A549 (cell line): ENCODE measurements at regions of chr2 and their contacts with region 1.

Region 1: DNA sequence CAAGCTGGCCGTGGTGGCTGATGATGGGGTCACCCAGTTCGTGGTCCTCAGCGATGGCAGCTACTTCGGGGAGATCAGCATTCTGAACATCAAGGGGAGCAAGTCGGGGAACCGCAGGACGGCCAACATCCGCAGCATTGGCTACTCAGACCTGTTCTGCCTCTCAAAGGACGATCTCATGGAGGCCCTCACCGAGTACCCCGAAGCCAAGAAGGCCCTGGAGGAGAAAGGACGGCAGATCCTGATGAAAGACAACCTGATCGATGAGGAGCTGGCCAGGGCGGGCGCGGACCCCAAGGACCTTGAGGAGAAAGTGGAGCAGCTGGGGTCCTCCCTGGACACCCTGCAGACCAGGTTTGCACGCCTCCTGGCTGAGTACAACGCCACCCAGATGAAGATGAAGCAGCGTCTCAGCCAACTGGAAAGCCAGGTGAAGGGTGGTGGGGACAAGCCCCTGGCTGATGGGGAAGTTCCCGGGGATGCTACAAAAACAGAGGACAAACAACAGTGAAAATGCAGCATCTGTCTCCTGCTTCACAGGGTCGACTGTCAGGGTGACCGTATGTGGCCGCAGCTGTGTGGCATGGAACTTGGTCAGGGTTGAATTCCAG is 47.8 kb upstream of the INPP4A start:
- DNase-seq: no peak
- ATAC-seq: no peak
- H3K4me3 ChIP-seq: no peak overlapping the region
- H3K27ac ChIP-seq: no peak overlapping the region
- H3K4me1 ChIP-seq: no peaks in the 10 kb centered on the region
- CTCF ChIP-seq: no peak
- EP300 ChIP-seq: no peak
- POLR2A ChIP-seq: no peak
- RAD21 ChIP-seq: no peak

Region 2: DNA sequence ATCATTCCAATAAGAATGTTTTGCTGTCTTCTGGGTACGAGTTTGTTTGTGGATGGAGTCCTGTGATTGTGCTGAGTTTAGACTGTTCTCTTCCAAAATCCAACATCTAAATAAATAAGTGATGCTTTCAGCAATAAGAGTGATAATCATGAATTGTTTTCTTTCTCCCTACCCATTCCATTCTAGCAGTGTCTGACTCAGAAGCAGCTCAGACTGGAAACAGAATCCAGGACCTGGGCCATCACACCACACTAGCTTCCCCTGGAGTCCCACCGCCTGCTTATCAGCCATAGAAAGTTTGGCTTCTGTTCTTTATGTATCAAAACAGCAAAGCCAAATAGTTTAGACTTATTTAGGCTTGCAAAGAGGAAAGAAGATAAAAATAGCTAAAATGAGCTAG is 127.0 kb before region 1 on chr2:
- CTCF ChIA-PET with region 1: no interaction called
- POLR2A ChIA-PET with region 1: no interaction called
- DNase-seq: no peak
- ATAC-seq: no peak
- H3K4me3 ChIP-seq: no peak overlapping the region
- H3K27ac ChIP-seq: no peak overlapping the region; a peak in 1 of 6 replicates
- H3K4me1 ChIP-seq: no peaks in the 10 kb centered on the region
- CTCF ChIP-seq: no peak
- EP300 ChIP-seq: no peak
- POLR2A ChIP-seq: no peak
- RAD21 ChIP-seq: no peak

Region 3: DNA sequence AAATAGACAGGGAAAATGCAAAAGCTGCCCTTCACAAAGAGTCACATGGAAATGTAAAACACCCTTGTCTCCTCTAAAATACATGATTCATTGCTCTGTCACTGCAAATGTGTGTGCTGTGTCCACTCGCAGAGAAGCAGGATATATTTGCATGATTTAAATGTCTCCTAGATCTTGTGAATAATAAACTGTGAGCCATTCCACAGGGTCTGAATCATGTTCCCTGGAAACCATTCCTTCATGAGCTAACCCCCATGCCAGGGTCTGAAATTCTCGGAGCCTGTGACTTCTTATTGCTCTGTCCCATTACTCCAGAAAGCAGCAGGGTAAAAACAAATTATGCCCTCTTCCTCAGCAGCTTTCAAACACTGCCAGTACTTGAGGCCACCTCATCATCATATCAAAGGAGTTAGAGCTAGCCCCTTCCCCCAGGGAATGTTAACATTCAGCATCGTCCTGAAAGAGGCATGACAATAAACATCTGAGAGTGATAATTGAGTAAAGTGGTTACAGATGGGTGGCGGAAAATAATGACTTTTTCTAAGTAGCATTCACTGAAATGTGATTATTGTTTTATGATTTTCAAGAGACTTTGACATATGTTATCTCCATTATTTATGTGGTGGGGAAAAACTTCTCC is 62.3 kb before region 1 on chr2:
- CTCF ChIA-PET with region 1: no interaction called
- POLR2A ChIA-PET with region 1: no interaction called
- DNase-seq: peak; percentile 10 to 50
- ATAC-seq: peak; percentile 95
- H3K4me3 ChIP-seq: no peak overlapping the region
- H3K27ac ChIP-seq: peak overlapping the region; percentile 46 to 52; a peak in 5 of 6 replicates
- H3K4me1 ChIP-seq: peaks cover 16% of the 10 kb centered on the region
- CTCF ChIP-seq: no peak
- EP300 ChIP-seq: no peak
- POLR2A ChIP-seq: no peak
- RAD21 ChIP-seq: no peak

Region 4: DNA sequence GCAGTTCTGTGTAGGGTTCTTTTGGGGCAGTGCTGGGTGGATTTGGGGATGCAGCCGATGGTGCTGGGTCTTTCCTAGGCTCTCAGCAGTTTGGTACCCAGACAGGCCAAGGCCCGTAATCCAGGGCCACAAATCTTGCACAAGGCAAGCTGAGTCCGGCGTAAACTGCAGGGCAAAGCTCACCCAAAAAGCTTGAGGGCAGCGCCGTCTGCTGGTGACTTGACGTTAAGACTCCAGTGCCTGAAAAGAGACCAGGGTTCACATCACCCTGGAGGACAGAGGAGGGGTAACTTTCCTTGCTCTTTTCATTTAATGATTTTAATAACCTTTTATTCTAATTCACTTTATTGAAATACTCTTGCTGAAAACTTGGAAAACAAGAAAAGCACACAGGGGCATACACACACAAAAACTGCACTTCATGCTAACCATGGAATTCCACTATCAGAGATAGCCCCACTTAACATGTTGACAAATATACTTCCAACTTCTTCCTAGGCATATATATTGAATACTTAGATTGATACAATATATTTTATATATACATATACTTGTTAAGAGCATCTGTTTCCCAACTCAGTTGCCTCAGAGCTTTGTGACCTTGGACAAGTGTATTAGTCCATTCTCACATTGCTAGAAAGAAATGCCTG is 11.7 kb before region 1 on chr2:
- CTCF ChIA-PET with region 1: interaction called, 11 read pairs
- POLR2A ChIA-PET with region 1: no interaction called
- DNase-seq: peak; percentile 76 to 78
- ATAC-seq: peak; percentile 87 to 98
- H3K4me3 ChIP-seq: no peak overlapping the region
- H3K27ac ChIP-seq: no peak overlapping the region
- H3K4me1 ChIP-seq: no peaks in the 10 kb centered on the region
- CTCF ChIP-seq: peak; percentile 95
- EP300 ChIP-seq: no peak
- POLR2A ChIP-seq: no peak
- RAD21 ChIP-seq: peak; percentile 97 to 99